ENCODE measurements at regions of chr18 and their contacts with region 1.

Region 1: GRCh38 chr18:13281406-13281805 is 62.8 kb downstream of the LDLRAD4 start:
- DNase-seq: no peak
- H3K4me3 ChIP-seq: no peak overlapping the region
- H3K27ac ChIP-seq: no peak overlapping the region
- H3K4me1 ChIP-seq: peaks cover 9% of the 10 kb centered on the region
- H3K27me3 ChIP-seq: no peaks in the 10 kb centered on the region
- CTCF ChIP-seq: no peak
- POLR2A ChIP-seq: no peak

Region 2: DNA sequence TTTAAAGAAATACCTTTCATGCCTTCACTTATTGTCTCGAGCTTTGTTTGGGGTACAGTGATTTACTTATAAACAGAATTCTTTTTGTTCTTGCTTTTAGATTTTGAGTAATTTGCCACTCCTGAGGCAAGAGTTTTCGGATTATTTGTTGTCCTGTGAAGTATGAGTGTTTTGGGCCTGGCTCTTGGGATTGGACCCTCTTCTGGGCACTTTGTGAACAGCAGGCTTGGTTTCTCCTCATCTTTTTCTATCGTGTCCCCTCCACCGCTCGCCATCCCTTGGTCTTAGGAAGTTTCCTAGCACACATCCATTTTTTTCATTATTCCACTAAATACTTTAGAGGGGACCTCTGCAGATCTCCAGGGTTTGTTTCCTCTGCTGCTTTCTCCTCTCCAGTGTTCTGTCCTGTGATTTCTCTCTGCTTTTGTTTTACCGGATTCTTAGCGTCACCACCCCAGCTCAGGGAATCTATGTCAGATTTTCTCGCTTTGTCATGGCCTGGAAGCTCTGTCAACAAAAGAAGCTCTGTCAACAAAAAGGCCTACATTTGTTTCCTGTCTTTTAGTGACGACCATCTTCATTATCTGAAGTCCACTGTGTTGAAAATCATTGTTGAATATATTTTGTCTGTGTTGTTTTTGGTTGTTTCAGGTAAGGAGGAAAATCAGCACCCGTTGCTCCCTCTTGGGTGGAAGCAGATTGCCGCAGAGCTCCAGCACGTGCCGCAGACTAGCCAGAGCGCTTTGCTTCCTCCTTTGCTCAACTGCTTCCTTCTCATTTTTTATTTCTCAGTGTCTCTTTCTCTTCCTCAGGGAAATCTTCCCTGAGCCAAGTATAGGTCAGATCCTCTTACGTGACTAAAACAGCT is 1160.0 kb before region 1 on chr18:
- intact Hi-C with region 1: no loop called
- DNase-seq: no peak
- H3K4me3 ChIP-seq: no peak overlapping the region
- H3K27ac ChIP-seq: no peak overlapping the region
- H3K4me1 ChIP-seq: no peaks in the 10 kb centered on the region
- H3K27me3 ChIP-seq: no peaks in the 10 kb centered on the region
- CTCF ChIP-seq: no peak
- POLR2A ChIP-seq: no peak

Region 3: DNA sequence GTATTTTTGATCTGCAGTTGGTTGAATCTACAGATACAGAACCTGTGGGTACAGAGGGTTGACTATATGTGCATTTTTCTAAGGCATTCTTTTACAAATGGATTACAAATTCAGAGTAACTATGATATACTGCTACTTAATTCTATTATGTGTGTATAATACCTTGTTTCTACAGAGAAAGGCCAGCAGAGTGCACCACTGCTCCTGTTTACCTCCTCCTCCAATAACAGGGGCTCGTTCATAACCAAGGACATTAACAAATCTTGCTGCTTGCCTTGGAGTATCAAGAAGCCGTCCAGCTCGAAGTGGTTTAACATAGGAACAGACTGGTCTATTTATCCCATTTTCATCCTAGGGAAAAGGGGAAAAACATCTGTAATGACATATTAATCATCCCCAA is 595.3 kb before region 1 on chr18:
- intact Hi-C with region 1: no loop called
- DNase-seq: no peak
- H3K4me3 ChIP-seq: no peak overlapping the region
- H3K27ac ChIP-seq: no peak overlapping the region
- H3K4me1 ChIP-seq: no peaks in the 10 kb centered on the region
- H3K27me3 ChIP-seq: no peaks in the 10 kb centered on the region
- CTCF ChIP-seq: no peak
- POLR2A ChIP-seq: no peak

Region 4: DNA sequence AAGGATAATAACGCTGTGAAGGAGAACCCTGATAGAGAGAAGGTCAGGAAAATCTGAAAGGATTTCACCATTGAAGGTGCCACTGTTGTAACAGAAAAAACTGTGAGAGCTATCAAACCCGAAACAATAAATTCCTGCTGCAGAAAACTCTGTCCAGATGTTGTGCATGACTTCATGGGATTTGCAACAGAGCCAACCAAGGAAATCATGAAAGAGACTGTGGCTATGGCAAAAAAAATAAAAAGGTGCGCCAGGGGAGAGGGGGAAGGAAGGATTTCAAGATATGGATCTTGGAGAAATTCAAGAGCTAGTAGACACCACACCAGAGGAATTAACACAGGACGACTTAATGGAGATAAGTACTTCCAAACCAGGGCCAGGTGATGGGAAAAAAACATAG is 25.2 kb after region 1 on chr18:
- intact Hi-C with region 1: loop called (anchors 1 kb)
- DNase-seq: no peak
- H3K4me3 ChIP-seq: no peak overlapping the region
- H3K27ac ChIP-seq: no peak overlapping the region
- H3K4me1 ChIP-seq: peaks cover 14% of the 10 kb centered on the region
- H3K27me3 ChIP-seq: no peaks in the 10 kb centered on the region
- CTCF ChIP-seq: no peak
- POLR2A ChIP-seq: no peak